Pancreas (tissue), 10 donors: ENCODE measurements at regions of chr18 and their contacts with region 1.

Region 1: DNA sequence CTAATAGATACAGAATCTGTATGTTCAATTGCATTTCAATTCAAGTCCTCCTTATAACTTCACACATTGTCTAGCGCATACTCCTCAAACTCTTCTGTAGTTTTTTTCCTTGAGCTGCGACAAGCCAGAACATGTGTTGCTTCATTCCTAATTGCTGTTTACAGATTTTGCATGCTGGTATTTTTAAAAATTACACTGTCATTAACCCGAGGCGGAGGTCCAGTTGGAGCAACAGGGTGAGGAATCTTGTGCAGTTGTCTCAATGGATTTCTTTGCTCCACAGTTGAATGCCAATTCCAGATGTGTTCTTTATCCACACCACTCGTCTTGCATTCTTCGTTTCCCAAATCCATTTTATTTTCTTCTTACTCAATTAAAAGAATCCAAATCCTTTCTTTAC is 16.4 kb upstream of the SERPINB13 start:
- DNase-seq: no peak
- ATAC-seq: no peak
- H3K4me3 ChIP-seq: no peak overlapping the region
- H3K27ac ChIP-seq: no peak overlapping the region
- H3K4me1 ChIP-seq: no peaks in the 10 kb centered on the region
- H3K27me3 ChIP-seq: no peaks in the 10 kb centered on the region
- CTCF ChIP-seq: no peak

Region 2: GRCh38 chr18:63523660-63524059 is 47.1 kb before region 1 on chr18:
- intact Hi-C with region 1: loop called in 1 of 3 experiments (anchors 5 kb)
- DNase-seq: no peak
- ATAC-seq: no peak
- H3K4me3 ChIP-seq: no peak overlapping the region
- H3K27ac ChIP-seq: no peak overlapping the region
- H3K4me1 ChIP-seq: peaks cover 0 to 2% (median 0%) of the 10 kb centered on the region in 3 donors
- H3K27me3 ChIP-seq: no peaks in the 10 kb centered on the region
- CTCF ChIP-seq: no peak